GM23248 (cell line): ENCODE measurements at regions of chr3 and their contacts with region 1.

Region 1: DNA sequence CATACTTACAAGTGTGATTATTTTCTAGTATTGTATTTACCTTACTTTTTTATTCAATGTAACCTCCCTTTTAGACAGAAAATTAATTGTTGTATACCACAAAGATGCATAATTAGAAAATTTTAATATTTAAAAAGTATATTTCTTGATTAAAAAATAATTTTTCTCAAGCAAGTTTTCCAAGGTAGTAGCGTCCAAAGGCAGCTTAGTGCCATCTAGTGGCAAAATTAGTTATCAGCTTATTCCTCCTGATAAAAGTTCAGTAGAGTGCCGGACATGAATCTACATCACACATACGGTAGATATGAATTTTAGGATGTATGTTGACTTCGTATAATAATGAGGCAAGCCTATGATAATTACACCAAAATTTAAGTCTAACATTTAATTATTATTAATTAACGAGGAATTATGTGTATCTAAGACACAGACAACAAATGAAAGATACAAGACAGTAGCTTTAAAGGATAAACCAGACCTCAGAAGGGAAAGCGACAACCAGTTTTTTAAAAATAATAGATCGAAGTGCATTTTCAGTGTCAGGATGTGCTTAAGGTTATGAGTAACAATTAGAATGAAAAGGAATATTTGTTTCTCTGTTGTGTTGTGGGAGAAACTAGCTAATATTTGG is 405.9 kb downstream of the ROBO1 start:
- DNase-seq: peak; percentile 66
- H3K4me3 ChIP-seq: no peak overlapping the region
- H3K27ac ChIP-seq: no peak overlapping the region
- H3K4me1 ChIP-seq: peaks cover 6% of the 10 kb centered on the region
- H3K27me3 ChIP-seq: no peaks in the 10 kb centered on the region

Region 2: DNA sequence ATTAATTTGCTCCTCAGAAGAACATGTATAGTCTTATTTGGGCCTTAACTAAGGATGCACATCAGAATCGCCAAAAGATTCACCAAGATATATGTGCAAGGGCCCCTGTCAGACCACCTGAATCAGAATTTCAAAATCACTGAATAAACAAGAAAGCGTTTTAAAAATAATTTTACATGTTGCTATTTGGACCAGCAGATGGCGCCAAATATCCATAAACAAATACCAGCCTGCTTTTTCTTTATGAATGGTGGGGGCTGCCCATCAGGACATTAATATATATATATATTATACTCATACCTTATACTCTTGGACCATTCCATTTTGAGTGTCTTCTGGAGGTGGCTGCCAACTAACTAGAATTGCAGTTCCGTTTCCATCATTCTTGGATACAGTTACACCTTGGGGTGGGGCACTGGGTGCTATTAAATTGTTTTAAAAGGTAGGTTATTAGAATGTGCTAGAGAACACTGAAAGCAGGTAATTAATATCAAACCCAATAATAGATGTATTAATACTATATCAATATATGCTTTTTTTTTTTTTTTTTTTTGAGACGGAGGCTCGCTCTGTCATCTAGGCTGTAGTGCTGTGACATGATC is 702.4 kb before region 1 on chr3:
- in situ Hi-C with region 1: loop called (anchors 25 kb)
- DNase-seq: peak; percentile 62
- H3K4me3 ChIP-seq: no peak overlapping the region
- H3K27ac ChIP-seq: no peak overlapping the region
- H3K4me1 ChIP-seq: peaks cover 4% of the 10 kb centered on the region
- H3K27me3 ChIP-seq: no peaks in the 10 kb centered on the region

Region 3: DNA sequence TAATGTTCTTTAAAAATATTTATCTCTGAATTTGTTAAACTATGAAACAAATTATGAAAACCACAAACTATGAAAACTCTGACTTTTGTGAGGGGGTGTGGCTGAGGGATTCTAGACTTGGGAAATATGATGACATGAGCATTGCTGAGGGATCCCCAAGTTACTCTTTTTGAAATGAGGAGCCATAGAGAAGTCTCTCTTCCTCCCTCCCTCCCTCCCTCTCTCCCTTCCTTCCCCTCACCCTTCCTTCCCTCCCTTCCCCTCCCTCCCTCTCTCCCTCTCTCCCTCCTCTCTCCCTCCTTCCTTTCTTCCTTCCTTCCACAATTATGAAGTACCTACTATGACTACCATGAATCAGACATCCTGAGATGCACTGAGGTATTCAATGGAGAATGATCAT is 267.2 kb before region 1 on chr3:
- in situ Hi-C with region 1: loop called (anchors 5 kb)
- DNase-seq: no peak
- H3K4me3 ChIP-seq: no peak overlapping the region
- H3K27ac ChIP-seq: no peak overlapping the region
- H3K4me1 ChIP-seq: no peaks in the 10 kb centered on the region
- H3K27me3 ChIP-seq: no peaks in the 10 kb centered on the region

Region 4: GRCh38 chr3:79236496-79236895 is 125.4 kb before region 1 on chr3:
- in situ Hi-C with region 1: no loop called
- DNase-seq: peak; percentile 8
- H3K4me3 ChIP-seq: no peak overlapping the region
- H3K27ac ChIP-seq: no peak overlapping the region
- H3K4me1 ChIP-seq: no peaks in the 10 kb centered on the region
- H3K27me3 ChIP-seq: no peaks in the 10 kb centered on the region